A549 (cell line): ENCODE measurements at regions of chr5 and their contacts with region 1.

Region 1: DNA sequence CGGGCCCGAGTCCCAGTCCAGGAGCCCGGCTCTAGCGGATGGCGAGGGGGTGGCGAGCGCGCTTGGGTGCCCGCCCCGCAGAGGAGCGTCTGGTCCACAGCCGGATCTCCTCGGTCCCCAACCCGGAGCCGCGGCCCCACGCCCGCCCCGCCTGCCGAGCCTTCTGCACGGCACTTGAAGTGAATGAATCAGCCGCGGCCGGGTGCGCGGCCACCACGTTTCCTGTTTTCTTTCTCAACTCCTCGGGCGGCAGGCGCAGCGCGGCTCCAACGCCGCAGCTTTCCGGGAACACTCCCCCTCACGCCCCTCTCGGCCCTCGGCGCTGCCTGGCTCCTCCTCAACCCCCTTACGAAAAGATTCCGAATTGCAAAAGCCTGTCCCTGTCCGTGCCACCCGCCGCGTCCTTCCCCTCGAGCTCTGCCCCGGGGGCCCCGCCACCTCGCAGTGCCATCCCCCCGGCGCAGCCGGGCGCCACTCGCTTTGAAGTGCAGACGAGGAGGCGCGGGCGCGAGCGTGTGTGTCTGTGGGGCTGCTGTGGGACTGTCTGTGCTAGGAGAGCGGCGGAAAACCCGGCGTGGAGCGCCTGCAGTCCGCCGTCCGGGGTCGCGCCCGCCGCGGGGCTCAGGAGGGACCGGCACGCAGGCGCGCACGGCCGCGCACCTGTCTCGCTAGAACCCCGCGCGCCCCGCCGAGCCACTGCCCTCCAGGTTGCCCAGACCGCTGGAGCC is 456.6 kb downstream of the RAB3C start:
- DNase-seq: peak in 1 of 2 experiments; percentile 85
- ATAC-seq: peak; percentile 63 to 68
- H3K4me3 ChIP-seq: peak overlapping the region; percentile 74
- H3K27ac ChIP-seq: peak overlapping the region; percentile 95 to 99
- H3K4me1 ChIP-seq: peaks cover 38% of the 10 kb centered on the region
- CTCF ChIP-seq: no peak
- EP300 ChIP-seq: peak; percentile 71 to 85; a peak in 3 of 5 replicates
- POLR2A ChIP-seq: peak; percentile 8; the same call in 1 of the 2 replicates
- RAD21 ChIP-seq: no peak; a peak in 1 of 5 replicates

Region 2: GRCh38 chr5:58988938-58989337 is 50.5 kb before region 1 on chr5:
- CTCF ChIA-PET with region 1: no interaction called
- POLR2A ChIA-PET with region 1: no interaction called
- DNase-seq: no peak
- ATAC-seq: no peak
- H3K4me3 ChIP-seq: no peak overlapping the region
- H3K27ac ChIP-seq: peak overlapping the region in 1 of 2 experiments; percentile 55; a peak in 2 of 6 replicates
- H3K4me1 ChIP-seq: peaks cover 100% of the 10 kb centered on the region
- CTCF ChIP-seq: no peak
- EP300 ChIP-seq: no peak
- POLR2A ChIP-seq: no peak
- RAD21 ChIP-seq: no peak

Region 3: GRCh38 chr5:59055745-59056448 is 16.4 kb after region 1 on chr5:
- CTCF ChIA-PET with region 1: interaction called, 6 read pairs
- POLR2A ChIA-PET with region 1: interaction called, 17 read pairs
- DNase-seq: peak; percentile 40 to 99
- ATAC-seq: peak; percentile 89 to 93
- H3K4me3 ChIP-seq: no peak overlapping the region
- H3K27ac ChIP-seq: peak overlapping the region; percentile 95 to 98
- H3K4me1 ChIP-seq: peaks cover 97% of the 10 kb centered on the region
- CTCF ChIP-seq: no peak
- EP300 ChIP-seq: peak; percentile 99 to 100
- POLR2A ChIP-seq: no peak
- RAD21 ChIP-seq: peak; percentile 6 to 56; a peak in 3 of 5 replicates